PC-9 (cell line): ENCODE measurements at regions of chr16 and their contacts with region 1.

Region 1: GRCh38 chr16:72149676-72150464 is 22.1 kb downstream of the PMFBP1 start:
- DNase-seq: no peak
- H3K4me3 ChIP-seq: no peak overlapping the region
- H3K27ac ChIP-seq: no peak overlapping the region
- H3K4me1 ChIP-seq: no peaks in the 10 kb centered on the region
- H3K27me3 ChIP-seq: peaks cover 55% of the 10 kb centered on the region
- CTCF ChIP-seq: no peak

Region 2: GRCh38 chr16:72112906-72113615 is 36.8 kb before region 1 on chr16:
- CTCF ChIA-PET with region 1: interaction called, 15 read pairs
- POLR2A ChIA-PET with region 1: no interaction called
- intact Hi-C with region 1: no loop called
- DNase-seq: no peak
- H3K4me3 ChIP-seq: no peak overlapping the region
- H3K27ac ChIP-seq: no peak overlapping the region
- H3K4me1 ChIP-seq: no peaks in the 10 kb centered on the region
- H3K27me3 ChIP-seq: no peaks in the 10 kb centered on the region
- CTCF ChIP-seq: no peak

Region 3: DNA sequence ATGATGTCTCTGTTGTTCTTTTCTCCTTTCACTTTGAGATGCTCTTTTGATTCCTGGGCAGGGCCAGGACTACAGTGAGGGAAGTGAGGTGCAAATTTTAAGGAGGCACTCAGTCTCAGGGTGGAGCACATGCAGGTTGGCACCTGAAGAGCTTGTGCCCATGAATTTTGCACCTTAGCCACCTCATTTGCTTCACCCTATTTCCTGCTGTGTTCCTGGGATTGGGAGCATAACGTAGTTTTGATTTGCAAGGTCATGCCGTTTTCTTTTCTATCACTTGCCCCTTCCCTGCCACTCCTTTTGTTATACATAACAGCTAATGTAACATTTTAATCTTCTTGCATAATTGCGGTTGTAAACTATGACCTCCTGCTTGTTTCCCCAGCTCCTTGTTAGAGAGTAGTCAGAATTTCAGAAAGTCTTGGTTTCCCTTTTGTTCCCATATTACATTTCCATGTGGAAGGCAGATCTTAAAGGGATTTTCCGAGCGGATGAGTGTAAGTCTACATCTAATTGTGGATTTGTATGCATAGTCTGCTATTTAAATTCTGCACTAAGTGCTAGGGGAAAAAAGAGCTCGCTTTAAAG is 12.3 kb after region 1 on chr16:
- CTCF ChIA-PET with region 1: no interaction called
- POLR2A ChIA-PET with region 1: no interaction called
- intact Hi-C with region 1: no loop called
- DNase-seq: no peak
- H3K4me3 ChIP-seq: no peak overlapping the region
- H3K27ac ChIP-seq: no peak overlapping the region
- H3K4me1 ChIP-seq: no peaks in the 10 kb centered on the region
- H3K27me3 ChIP-seq: peaks cover 91% of the 10 kb centered on the region
- CTCF ChIP-seq: no peak